B cell (primary cell): ENCODE measurements at regions of chr5 and their contacts with region 1.

Region 1: DNA sequence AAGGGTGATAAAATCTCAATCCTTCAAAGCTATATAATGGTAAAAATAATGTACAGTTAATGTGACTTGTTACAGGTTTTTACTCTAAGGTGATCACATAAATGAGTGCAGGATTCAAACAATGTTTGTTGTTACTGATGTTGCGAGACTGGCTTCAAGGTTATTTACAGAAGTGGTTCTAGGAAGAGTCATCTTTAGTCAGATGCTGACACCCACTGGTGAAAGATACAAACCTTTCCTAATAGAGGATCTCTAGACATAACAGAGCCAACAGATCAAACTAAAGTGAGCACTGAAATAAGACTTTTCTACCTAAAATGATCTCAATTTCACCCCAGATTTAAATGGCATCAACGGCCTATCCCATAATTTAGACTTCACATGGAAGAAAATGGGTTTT is 20.2 kb downstream of the ARSB start:
- DNase-seq: peak; percentile 76
- ATAC-seq: peak; percentile 78
- H3K4me3 ChIP-seq: no peak overlapping the region
- H3K4me3 Mint-ChIP-seq: no peak overlapping the region
- H3K27ac ChIP-seq: no peak overlapping the region
- H3K27ac Mint-ChIP-seq: no peak overlapping the region
- H3K4me1 ChIP-seq: no peaks in the 10 kb centered on the region
- H3K4me1 Mint-ChIP-seq: no peaks in the 10 kb centered on the region
- H3K27me3 ChIP-seq: no peaks in the 10 kb centered on the region
- H3K27me3 Mint-ChIP-seq: no peaks in the 10 kb centered on the region
- CTCF ChIP-seq: peak; percentile 78

Region 2: DNA sequence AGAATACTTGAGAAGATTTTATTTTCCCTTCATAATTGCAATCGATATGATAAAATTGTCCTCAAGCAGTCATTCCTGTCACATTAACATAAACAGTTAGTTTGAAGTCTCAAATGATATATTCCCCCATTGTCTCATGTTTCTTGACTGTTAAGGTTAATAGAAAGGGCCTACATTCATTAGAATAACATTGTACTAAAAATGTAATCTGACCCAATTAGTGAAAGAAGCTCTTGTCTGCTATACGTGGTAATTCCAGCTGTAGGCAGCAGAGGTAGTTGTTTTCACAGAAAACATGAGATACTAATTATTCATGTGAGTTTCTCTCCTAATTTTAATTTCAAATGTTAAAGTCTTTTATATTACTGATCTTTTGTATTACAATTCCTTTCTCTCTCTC is 644.5 kb before region 1 on chr5:
- CTCF ChIA-PET with region 1: interaction called, 18 read pairs
- POLR2A ChIA-PET with region 1: no interaction called
- intact Hi-C with region 1: no loop called
- DNase-seq: peak; percentile 20
- ATAC-seq: no peak
- H3K4me3 ChIP-seq: no peak overlapping the region
- H3K4me3 Mint-ChIP-seq: no peak overlapping the region
- H3K27ac ChIP-seq: no peak overlapping the region
- H3K27ac Mint-ChIP-seq: no peak overlapping the region
- H3K4me1 ChIP-seq: no peaks in the 10 kb centered on the region
- H3K4me1 Mint-ChIP-seq: no peaks in the 10 kb centered on the region
- H3K27me3 ChIP-seq: no peaks in the 10 kb centered on the region
- H3K27me3 Mint-ChIP-seq: no peaks in the 10 kb centered on the region
- CTCF ChIP-seq: peak; percentile 49

Region 3: DNA sequence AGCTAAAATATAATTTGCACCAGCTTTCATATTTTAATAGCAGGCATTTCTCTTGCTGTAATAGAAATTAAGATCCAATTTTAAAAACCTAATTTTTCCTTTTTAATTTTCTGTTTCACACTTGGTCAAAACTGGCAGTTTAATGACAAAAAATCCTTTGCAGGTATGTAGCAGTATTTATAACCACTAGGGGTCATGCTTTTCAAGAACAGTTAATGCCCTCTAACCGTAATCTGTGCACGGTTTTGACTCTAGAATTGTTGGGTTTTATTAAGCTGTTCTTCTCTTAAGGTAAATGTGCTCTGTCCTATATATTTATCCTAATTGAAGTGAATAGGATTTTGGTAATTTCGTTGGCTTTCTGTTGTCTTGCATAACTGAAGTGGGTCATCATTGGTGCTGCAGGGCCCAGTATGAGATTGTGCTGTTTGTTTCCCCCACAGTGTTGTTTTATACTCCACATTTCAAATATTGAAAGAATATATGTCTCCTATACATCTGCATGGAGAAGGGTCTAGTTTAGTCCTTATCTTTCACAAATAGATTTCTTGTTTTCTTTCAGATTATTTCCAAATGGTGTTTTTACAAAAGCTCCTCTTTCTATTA is 497.0 kb before region 1 on chr5:
- CTCF ChIA-PET with region 1: interaction called, 78 read pairs
- POLR2A ChIA-PET with region 1: interaction called, 4 read pairs
- intact Hi-C with region 1: loop called (anchors 1 kb)
- DNase-seq: peak; percentile 47
- ATAC-seq: peak; percentile 63
- H3K4me3 ChIP-seq: no peak overlapping the region
- H3K4me3 Mint-ChIP-seq: no peak overlapping the region
- H3K27ac ChIP-seq: no peak overlapping the region
- H3K27ac Mint-ChIP-seq: no peak overlapping the region
- H3K4me1 ChIP-seq: no peaks in the 10 kb centered on the region
- H3K4me1 Mint-ChIP-seq: peaks cover 3% of the 10 kb centered on the region
- H3K27me3 ChIP-seq: no peaks in the 10 kb centered on the region
- H3K27me3 Mint-ChIP-seq: no peaks in the 10 kb centered on the region
- CTCF ChIP-seq: peak; percentile 90

Region 4: DNA sequence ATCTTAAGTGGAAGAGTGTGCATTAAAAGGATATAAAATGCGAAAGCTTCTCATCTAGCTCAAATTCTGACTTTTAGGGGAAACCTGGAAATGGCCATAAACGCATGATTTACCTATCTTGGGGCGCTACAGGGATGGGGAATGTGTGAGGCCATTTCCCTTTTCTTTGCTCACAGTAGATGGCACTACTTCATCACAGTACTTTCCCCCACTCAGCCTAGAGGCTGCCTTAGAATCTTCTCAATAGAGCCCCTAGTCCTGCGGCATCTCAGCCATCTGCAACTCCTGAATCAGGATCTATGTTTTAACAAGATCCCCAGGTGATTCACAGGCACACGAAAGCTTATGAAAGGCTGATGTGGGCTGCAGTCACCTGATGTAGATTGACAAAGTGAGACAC is 427.1 kb before region 1 on chr5:
- CTCF ChIA-PET with region 1: interaction called, 146 read pairs
- POLR2A ChIA-PET with region 1: no interaction called
- intact Hi-C with region 1: loop called (anchors 1 kb)
- DNase-seq: peak; percentile 65
- ATAC-seq: peak; percentile 75
- H3K4me3 ChIP-seq: no peak overlapping the region
- H3K4me3 Mint-ChIP-seq: no peak overlapping the region
- H3K27ac ChIP-seq: no peak overlapping the region
- H3K27ac Mint-ChIP-seq: no peak overlapping the region
- H3K4me1 ChIP-seq: peaks cover 0 to 3% of the 10 kb centered on the region in 2 donors
- H3K4me1 Mint-ChIP-seq: peaks cover 6% of the 10 kb centered on the region
- H3K27me3 ChIP-seq: no peaks in the 10 kb centered on the region
- H3K27me3 Mint-ChIP-seq: no peaks in the 10 kb centered on the region
- CTCF ChIP-seq: peak; percentile 63

Region 5: GRCh38 chr5:78648359-78649210 is 316.3 kb before region 1 on chr5 and contains the start of gene LHFPL2:
- CTCF ChIA-PET with region 1: interaction called, 8 read pairs
- POLR2A ChIA-PET with region 1: no interaction called
- intact Hi-C with region 1: loop called (anchors 10 kb)
- DNase-seq: peak; percentile 73
- ATAC-seq: peak; percentile 74
- H3K4me3 ChIP-seq: peak within 1 kb of the TSS; percentile 43 to 72 (median 64)
- H3K4me3 Mint-ChIP-seq: peak within 1 kb of the TSS; percentile 91
- H3K27ac ChIP-seq: no peak within 1 kb of the TSS
- H3K27ac Mint-ChIP-seq: peak within 1 kb of the TSS; percentile 83
- H3K4me1 ChIP-seq: peaks cover 16 to 18% of the 10 kb centered on the region in 2 donors
- H3K4me1 Mint-ChIP-seq: peaks cover 26% of the 10 kb centered on the region
- H3K27me3 ChIP-seq: peaks cover 0 to 11% (median 6%) of the 10 kb centered on the region in 4 experiments
- H3K27me3 Mint-ChIP-seq: no peaks in the 10 kb centered on the region
- CTCF ChIP-seq: no peak
- total RNA-seq, gene LHFPL2: 33.0 and 35.5 TPM in 2 replicates

Region 6: GRCh38 chr5:78886341-78887230 is 78.3 kb before region 1 on chr5:
- CTCF ChIA-PET with region 1: interaction called, 8 read pairs
- POLR2A ChIA-PET with region 1: no interaction called
- intact Hi-C with region 1: loop called (anchors 5 kb)
- DNase-seq: peak; percentile 38
- ATAC-seq: no peak
- H3K4me3 ChIP-seq: no peak overlapping the region
- H3K4me3 Mint-ChIP-seq: no peak overlapping the region
- H3K27ac ChIP-seq: no peak overlapping the region
- H3K27ac Mint-ChIP-seq: peak overlapping the region; percentile 60
- H3K4me1 ChIP-seq: peaks cover 24 to 36% of the 10 kb centered on the region in 2 donors
- H3K4me1 Mint-ChIP-seq: peaks cover 36% of the 10 kb centered on the region
- H3K27me3 ChIP-seq: no peaks in the 10 kb centered on the region
- H3K27me3 Mint-ChIP-seq: no peaks in the 10 kb centered on the region
- CTCF ChIP-seq: peak; percentile 69

Region 7: GRCh38 chr5:80686757-80687156 is 1721.9 kb after region 1 on chr5:
- CTCF ChIA-PET with region 1: no interaction called
- POLR2A ChIA-PET with region 1: no interaction called
- intact Hi-C with region 1: no loop called
- DNase-seq: no peak
- ATAC-seq: no peak
- H3K4me3 ChIP-seq: no peak overlapping the region
- H3K4me3 Mint-ChIP-seq: no peak overlapping the region
- H3K27ac ChIP-seq: no peak overlapping the region
- H3K27ac Mint-ChIP-seq: no peak overlapping the region
- H3K4me1 ChIP-seq: no peaks in the 10 kb centered on the region
- H3K4me1 Mint-ChIP-seq: peaks cover 5% of the 10 kb centered on the region
- H3K27me3 ChIP-seq: no peaks in the 10 kb centered on the region
- H3K27me3 Mint-ChIP-seq: no peaks in the 10 kb centered on the region
- CTCF ChIP-seq: peak; percentile 50